HEK293 (cell line): ENCODE measurements at regions of chr7 and their contacts with region 1.

Region 1: GRCh38 chr7:83957333-83957732 is 237.3 kb downstream of the SEMA3A start:
- H3K4me3 ChIP-seq: no peak overlapping the region
- H3K27ac ChIP-seq: no peak overlapping the region
- H3K4me1 ChIP-seq: no peaks in the 10 kb centered on the region
- CTCF ChIP-seq: no peak

Region 2: GRCh38 chr7:83947260-83947659 is 10.1 kb before region 1 on chr7:
- CTCF ChIA-PET with region 1: interaction called, 25 read pairs
- POLR2A ChIA-PET with region 1: interaction called, 3 read pairs
- H3K4me3 ChIP-seq: no peak overlapping the region
- H3K27ac ChIP-seq: no peak overlapping the region
- H3K4me1 ChIP-seq: no peaks in the 10 kb centered on the region
- CTCF ChIP-seq: no peak

Region 3: DNA sequence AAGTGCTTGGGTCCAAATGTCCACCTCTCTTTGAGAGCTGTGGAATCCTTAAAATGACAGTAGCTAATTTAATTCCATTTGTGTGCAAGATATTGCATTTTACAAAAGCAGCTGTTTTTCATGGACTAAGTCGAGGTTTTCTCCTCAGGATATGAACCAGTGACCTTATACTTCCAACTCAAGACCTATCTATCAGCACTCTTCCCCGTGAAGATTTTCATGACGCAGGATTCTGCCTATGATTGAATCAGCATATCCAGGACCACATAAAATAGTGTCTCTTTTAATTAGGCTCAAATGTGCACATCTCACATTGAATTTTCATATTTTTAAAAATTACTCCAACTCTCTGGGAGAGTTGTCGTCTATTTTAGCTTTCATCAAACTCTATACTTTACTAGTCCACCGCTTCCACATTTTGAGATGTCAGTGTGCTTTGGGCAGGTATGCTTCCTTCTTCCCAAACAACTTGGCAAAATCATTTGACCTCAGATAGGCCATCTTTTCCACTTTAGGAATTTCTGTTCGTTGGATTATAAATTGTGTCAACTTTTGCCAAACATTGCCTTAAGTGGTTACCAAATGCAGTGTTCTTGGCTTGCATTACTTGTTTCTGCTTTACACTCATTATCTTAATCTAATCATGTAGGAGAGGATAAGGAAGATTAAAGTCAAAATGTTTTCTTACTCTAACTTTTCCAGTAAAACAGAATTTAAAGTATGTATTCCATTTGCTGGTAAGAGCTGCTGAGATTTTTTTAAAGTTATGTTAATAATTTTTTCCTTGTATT is 197.9 kb after region 1 on chr7:
- CTCF ChIA-PET with region 1: no interaction called
- POLR2A ChIA-PET with region 1: no interaction called
- H3K4me3 ChIP-seq: no peak overlapping the region
- H3K27ac ChIP-seq: no peak overlapping the region
- H3K4me1 ChIP-seq: peaks cover 18% of the 10 kb centered on the region
- CTCF ChIP-seq: no peak